ENCODE measurements at regions of chr17 and their contacts with region 1.

Region 1: GRCh38 chr17:4948931-4949320 is 596 bp upstream of the PFN1 start:
- DNase-seq: peak; percentile 77 to 82 (median 80)
- H3K4me3 ChIP-seq: peak overlapping the region; percentile 92 to 95 (median 94)
- H3K4me3 Mint-ChIP-seq: peak overlapping the region; percentile 97 to 99
- H3K27ac ChIP-seq: peak overlapping the region; percentile 94
- H3K27ac Mint-ChIP-seq: peak overlapping the region; percentile 96 to 99 (median 98)
- H3K4me1 ChIP-seq: peaks cover 44 to 61% of the 10 kb centered on the region in 2 donors
- H3K4me1 Mint-ChIP-seq: peaks cover 45% of the 10 kb centered on the region
- H3K27me3 ChIP-seq: no peaks in the 10 kb centered on the region
- H3K27me3 Mint-ChIP-seq: peaks cover 2 to 8% (median 3%) of the 10 kb centered on the region in 3 donors
- CTCF ChIP-seq: no peak

Region 2: GRCh38 chr17:4706121-4706520 is 242.8 kb before region 1 on chr17:
- intact Hi-C with region 1: no loop called
- DNase-seq: peak in 1 of 3 donors; percentile 37
- H3K4me3 ChIP-seq: no peak overlapping the region
- H3K4me3 Mint-ChIP-seq: no peak overlapping the region
- H3K27ac ChIP-seq: no peak overlapping the region
- H3K27ac Mint-ChIP-seq: peak overlapping the region in 2 of 7 donors; percentile 55 to 59
- H3K4me1 ChIP-seq: peaks cover 24 to 27% of the 10 kb centered on the region in 2 donors
- H3K4me1 Mint-ChIP-seq: peaks cover 33% of the 10 kb centered on the region
- H3K27me3 ChIP-seq: no peaks in the 10 kb centered on the region
- H3K27me3 Mint-ChIP-seq: peaks cover 0 to 3% (median 0%) of the 10 kb centered on the region in 3 donors
- CTCF ChIP-seq: no peak

Region 3: DNA sequence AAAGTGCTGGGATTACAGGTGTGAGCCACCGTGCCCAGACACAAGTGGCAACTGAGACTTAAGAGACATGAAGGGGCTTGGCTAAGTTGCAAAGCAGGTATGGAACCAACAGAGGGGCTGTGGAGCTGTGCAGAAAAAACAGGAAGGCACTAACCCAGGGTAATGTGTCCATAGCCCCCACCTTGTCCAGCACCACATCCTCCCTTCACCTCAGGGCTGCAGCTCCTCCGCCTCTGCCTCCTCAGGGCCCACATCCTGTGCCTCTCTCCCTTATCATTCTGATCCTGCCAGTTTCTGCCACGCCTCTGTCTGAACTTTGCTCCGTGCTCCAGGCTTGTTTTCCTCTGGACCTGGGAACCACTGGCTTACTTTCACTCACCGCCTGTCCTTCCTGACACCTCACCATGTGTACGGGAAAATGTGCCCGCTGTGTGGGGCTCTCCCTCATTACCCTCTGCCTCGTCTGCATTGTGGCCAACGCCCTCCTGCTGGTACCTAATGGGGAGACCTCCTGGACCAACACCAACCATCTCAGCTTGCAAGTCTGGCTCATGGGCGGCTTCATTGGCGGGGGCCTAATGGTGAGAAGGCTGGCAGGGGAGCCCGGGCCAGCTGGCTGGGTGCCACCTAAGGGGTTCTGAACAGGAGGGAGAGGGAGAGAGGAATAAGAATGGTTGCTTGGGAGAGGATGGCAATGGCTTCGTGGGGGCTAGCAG is 177.2 kb before region 1 on chr17 and contains the start of gene TM4SF5:
- intact Hi-C with region 1: loop called in 1 of 2 experiments (anchors 5 kb)
- DNase-seq: no peak
- H3K4me3 ChIP-seq: no peak within 1 kb of the TSS
- H3K4me3 Mint-ChIP-seq: peak within 1 kb of the TSS in 1 of 2 donors; percentile 42
- H3K27ac ChIP-seq: peak within 1 kb of the TSS; percentile 51 to 98
- H3K27ac Mint-ChIP-seq: peak within 1 kb of the TSS; percentile 86 to 97 (median 94)
- H3K4me1 ChIP-seq: peaks cover 46 to 52% of the 10 kb centered on the region in 2 donors
- H3K4me1 Mint-ChIP-seq: peaks cover 45% of the 10 kb centered on the region
- H3K27me3 ChIP-seq: no peaks in the 10 kb centered on the region
- H3K27me3 Mint-ChIP-seq: peaks cover 4 to 31% (median 25%) of the 10 kb centered on the region in 3 donors
- CTCF ChIP-seq: no peak
- polyA plus RNA-seq, gene TM4SF5: not detected

Region 4: GRCh38 chr17:4903051-4903818 is 45.7 kb before region 1 on chr17 and contains the start of gene CHRNE:
- intact Hi-C with region 1: loop called in 1 of 2 experiments (anchors 5 kb)
- DNase-seq: peak; percentile 62 to 78 (median 64)
- H3K4me3 ChIP-seq: peak within 1 kb of the TSS in 1 of 3 experiments; percentile 83
- H3K4me3 Mint-ChIP-seq: peak within 1 kb of the TSS; percentile 62 to 68
- H3K27ac ChIP-seq: peak within 1 kb of the TSS; percentile 33 to 80
- H3K27ac Mint-ChIP-seq: peak within 1 kb of the TSS; percentile 79 to 96 (median 85)
- H3K4me1 ChIP-seq: peaks cover 47 to 53% of the 10 kb centered on the region in 2 donors
- H3K4me1 Mint-ChIP-seq: peaks cover 43% of the 10 kb centered on the region
- H3K27me3 ChIP-seq: peaks cover 0 to 26% of the 10 kb centered on the region in 2 donors
- H3K27me3 Mint-ChIP-seq: peaks cover 38 to 61% (median 60%) of the 10 kb centered on the region in 3 donors
- CTCF ChIP-seq: peak; percentile 91
- polyA plus RNA-seq, gene CHRNE: 0.54 to 12.6 (median 2.1) TPM

Region 5: GRCh38 chr17:4966844-4967538 is 18.1 kb after region 1 on chr17:
- intact Hi-C with region 1: loop called (anchors 1 to 2 kb)
- DNase-seq: peak; percentile 98 to 99 (median 98)
- H3K4me3 ChIP-seq: peak overlapping the region; percentile 43 to 99 (median 67)
- H3K4me3 Mint-ChIP-seq: no peak overlapping the region
- H3K27ac ChIP-seq: peak overlapping the region; percentile 94 to 96
- H3K27ac Mint-ChIP-seq: no peak overlapping the region
- H3K4me1 ChIP-seq: peaks cover 33 to 58% of the 10 kb centered on the region in 2 donors
- H3K4me1 Mint-ChIP-seq: peaks cover 32% of the 10 kb centered on the region
- H3K27me3 ChIP-seq: no peaks in the 10 kb centered on the region
- H3K27me3 Mint-ChIP-seq: peaks cover 0 to 4% (median 2%) of the 10 kb centered on the region in 3 donors
- CTCF ChIP-seq: no peak

Region 6: GRCh38 chr17:4986951-4987766 is 38.2 kb after region 1 on chr17 and contains the start of gene CAMTA2:
- intact Hi-C with region 1: loop called in 1 of 2 experiments (anchors 5 kb)
- DNase-seq: peak; percentile 78 to 82 (median 82)
- H3K4me3 ChIP-seq: peak within 1 kb of the TSS; percentile 78 to 99 (median 81)
- H3K4me3 Mint-ChIP-seq: peak within 1 kb of the TSS; percentile 92 to 96
- H3K27ac ChIP-seq: peak within 1 kb of the TSS; percentile 77 to 95
- H3K27ac Mint-ChIP-seq: peak within 1 kb of the TSS; percentile 84 to 97 (median 96)
- H3K4me1 ChIP-seq: peaks cover 35 to 45% of the 10 kb centered on the region in 2 donors
- H3K4me1 Mint-ChIP-seq: peaks cover 47% of the 10 kb centered on the region
- H3K27me3 ChIP-seq: no peaks in the 10 kb centered on the region
- H3K27me3 Mint-ChIP-seq: peaks cover 0 to 1% (median 0%) of the 10 kb centered on the region in 3 donors
- CTCF ChIP-seq: peak; percentile 93
- polyA plus RNA-seq, gene CAMTA2: 7.1 to 88.9 (median 7.6) TPM